Activated T-helper 1 cell treated with anti-CD3 and anti-CD28 coated beads, Interleukin-12 subunit alpha, Interleukin-12 subunit beta, Interleukin-2, Interleukin-4 antibody, amounts not matched to agents 30 ng/mL and 10 ng/mL and 1 ng/mL, durations not matched to agents 14 hours and 24 hours and 36 hours (primary cell): ENCODE measurements at regions of chr6 and their contacts with region 1.

Region 1: DNA sequence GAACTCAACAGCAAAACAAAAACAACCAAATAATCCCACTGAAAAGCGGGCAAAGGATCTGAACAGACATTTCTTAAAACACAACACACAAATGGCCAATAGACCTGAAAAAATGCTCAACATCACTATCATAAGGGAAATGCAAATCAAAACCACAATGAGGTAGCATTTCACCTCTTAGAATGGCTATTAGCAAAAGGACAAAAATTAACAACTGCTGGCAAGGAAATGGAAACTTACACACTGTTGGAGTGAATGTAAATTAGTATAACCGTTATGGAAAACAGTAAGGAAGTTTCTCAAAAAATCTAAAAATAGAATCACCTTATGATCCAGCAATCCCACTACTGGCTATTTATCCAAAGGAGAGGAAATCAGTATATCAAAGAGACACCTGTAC is 20.9 kb downstream of the FAM8A1 start:
- DNase-seq: no peak
- H3K4me3 Mint-ChIP-seq: no peak overlapping the region
- H3K27ac Mint-ChIP-seq: peak overlapping the region; percentile 45
- H3K4me1 Mint-ChIP-seq: peaks cover 36% of the 10 kb centered on the region
- H3K27me3 Mint-ChIP-seq: no peaks in the 10 kb centered on the region

Region 2: GRCh38 chr6:17610835-17611234 is 10.2 kb before region 1 on chr6:
- intact Hi-C with region 1: loop called (anchors 1 kb)
- DNase-seq: no peak
- H3K4me3 Mint-ChIP-seq: no peak overlapping the region
- H3K27ac Mint-ChIP-seq: peak overlapping the region; percentile 48
- H3K4me1 Mint-ChIP-seq: no peaks in the 10 kb centered on the region
- H3K27me3 Mint-ChIP-seq: no peaks in the 10 kb centered on the region